H1 (cell line): ENCODE measurements at regions of chr7 and their contacts with region 1.

Region 1: GRCh38 chr7:139482662-139483469 is 607 bp downstream of the KLRG2 start:
- DNase-seq: peak in 1 of 2 experiments; percentile 73
- H3K4me3 ChIP-seq: peak overlapping the region; percentile 57 to 71 (median 64)
- H3K27ac ChIP-seq: no peak overlapping the region
- H3K4me1 ChIP-seq: peaks cover 0 to 8% (median 4%) of the 10 kb centered on the region in 4 experiments; a peak in 5 of 7 replicates
- H3K27me3 ChIP-seq: peaks cover 0 to 11% (median 5%) of the 10 kb centered on the region in 4 experiments; a peak in 4 of 7 replicates
- CTCF ChIP-seq: no peak
- EP300 ChIP-seq: no peak
- POLR2A ChIP-seq: peak in 1 of 2 experiments; percentile 13; a peak in 1 of 3 replicates
- RAD21 ChIP-seq: no peak

Region 2: DNA sequence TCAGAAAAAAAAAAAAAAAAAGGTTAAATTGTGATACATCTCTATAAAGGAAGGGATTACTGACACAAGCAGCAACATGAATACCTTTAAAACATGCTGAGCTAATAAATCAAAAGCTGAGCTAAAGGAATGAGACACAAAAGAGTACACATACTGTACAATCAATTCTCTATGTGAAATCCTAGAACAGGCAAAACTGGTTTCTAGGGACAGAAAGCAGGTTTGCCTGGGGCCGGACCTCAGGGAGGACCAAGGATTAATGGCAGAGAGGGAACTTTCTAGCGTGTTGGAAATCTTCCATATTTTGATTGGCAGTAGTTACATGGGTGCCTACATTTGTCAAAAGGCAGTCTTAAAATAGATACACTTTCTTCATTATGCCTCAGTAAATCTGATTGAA is 51.9 kb before region 1 on chr7:
- CTCF ChIA-PET with region 1: interaction called, 16 read pairs
- POLR2A ChIA-PET with region 1: interaction called, 6 read pairs
- DNase-seq: no peak
- H3K4me3 ChIP-seq: no peak overlapping the region
- H3K27ac ChIP-seq: no peak overlapping the region
- H3K4me1 ChIP-seq: no peaks in the 10 kb centered on the region; a peak in 1 of 7 replicates
- H3K27me3 ChIP-seq: no peaks in the 10 kb centered on the region
- CTCF ChIP-seq: no peak
- EP300 ChIP-seq: no peak
- POLR2A ChIP-seq: no peak
- RAD21 ChIP-seq: no peak

Region 3: GRCh38 chr7:139471740-139472353 is 11.0 kb before region 1 on chr7:
- CTCF ChIA-PET with region 1: interaction called, 4 read pairs
- POLR2A ChIA-PET with region 1: interaction called, 10 read pairs
- DNase-seq: no peak
- H3K4me3 ChIP-seq: no peak overlapping the region
- H3K27ac ChIP-seq: peak overlapping the region; percentile 45; the same call in 1 of the 2 replicates
- H3K4me1 ChIP-seq: no peaks in the 10 kb centered on the region; a peak in 2 of 7 replicates
- H3K27me3 ChIP-seq: no peaks in the 10 kb centered on the region
- CTCF ChIP-seq: no peak
- EP300 ChIP-seq: no peak
- POLR2A ChIP-seq: no peak
- RAD21 ChIP-seq: no peak

Region 4: DNA sequence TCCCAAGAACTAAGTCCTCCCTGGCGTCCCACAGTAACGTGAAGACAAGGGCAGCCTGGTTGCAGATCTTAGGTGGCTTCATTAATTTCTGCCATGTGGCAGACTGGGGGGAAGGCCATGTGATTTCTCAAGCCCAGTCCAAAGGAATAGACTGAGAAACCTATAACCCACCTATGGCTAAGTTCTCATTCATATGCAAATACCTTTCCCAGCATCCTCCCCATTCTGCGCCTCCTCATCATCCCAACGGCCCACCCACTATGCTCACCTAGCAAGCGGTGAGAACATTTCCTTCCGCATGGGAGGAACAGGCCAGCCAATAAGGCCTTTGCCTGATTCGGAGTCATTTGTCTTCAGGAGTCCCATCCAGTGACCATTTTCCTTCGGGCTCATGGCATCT is 32.4 kb after region 1 on chr7:
- CTCF ChIA-PET with region 1: no interaction called
- POLR2A ChIA-PET with region 1: no interaction called
- DNase-seq: no peak
- H3K4me3 ChIP-seq: no peak overlapping the region
- H3K27ac ChIP-seq: no peak overlapping the region
- H3K4me1 ChIP-seq: peaks cover 0 to 8% (median under 1%) of the 10 kb centered on the region in 4 experiments; a peak in 3 of 7 replicates
- H3K27me3 ChIP-seq: no peaks in the 10 kb centered on the region
- CTCF ChIP-seq: no peak
- EP300 ChIP-seq: no peak
- POLR2A ChIP-seq: no peak
- RAD21 ChIP-seq: no peak